Heart right ventricle (tissue), 16 donors: ENCODE measurements at regions of chr2 and their contacts with region 1.

Region 1: DNA sequence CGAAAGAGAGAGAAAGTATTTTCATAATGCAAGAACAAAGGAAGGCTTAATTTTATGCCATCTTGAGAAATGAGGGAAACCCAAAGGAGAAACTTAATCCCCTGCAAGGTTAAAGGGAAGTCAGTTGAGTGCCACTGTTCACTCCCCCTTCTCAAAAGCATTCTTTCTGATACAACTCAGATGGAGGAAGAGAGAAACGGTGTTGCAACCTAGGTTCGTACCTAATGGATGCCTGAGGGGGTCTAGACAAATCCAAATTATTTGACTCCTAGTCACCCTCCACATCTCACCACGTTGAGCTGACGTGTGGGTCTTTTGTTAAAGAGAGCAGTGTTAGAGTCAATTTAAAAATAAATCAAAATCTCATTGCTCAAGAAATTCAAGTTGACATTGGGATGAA is 52.6 kb upstream of the UNC80 start:
- DNase-seq: no peak
- ATAC-seq: no peak
- H3K4me3 ChIP-seq: no peak overlapping the region
- H3K27ac ChIP-seq: no peak overlapping the region
- H3K4me1 ChIP-seq: no peaks in the 10 kb centered on the region
- H3K27me3 ChIP-seq: no peaks in the 10 kb centered on the region
- CTCF ChIP-seq: no peak

Region 2: GRCh38 chr2:209762563-209762962 is 43.5 kb after region 1 on chr2:
- intact Hi-C with region 1: loop called in 1 of 10 experiments (anchors 10 kb)
- DNase-seq: no peak
- ATAC-seq: no peak
- H3K4me3 ChIP-seq: no peak overlapping the region
- H3K27ac ChIP-seq: no peak overlapping the region
- H3K4me1 ChIP-seq: no peaks in the 10 kb centered on the region
- H3K27me3 ChIP-seq: no peaks in the 10 kb centered on the region
- CTCF ChIP-seq: no peak